ENCODE measurements at regions of chr11 and their contacts with region 1.

Region 1: DNA sequence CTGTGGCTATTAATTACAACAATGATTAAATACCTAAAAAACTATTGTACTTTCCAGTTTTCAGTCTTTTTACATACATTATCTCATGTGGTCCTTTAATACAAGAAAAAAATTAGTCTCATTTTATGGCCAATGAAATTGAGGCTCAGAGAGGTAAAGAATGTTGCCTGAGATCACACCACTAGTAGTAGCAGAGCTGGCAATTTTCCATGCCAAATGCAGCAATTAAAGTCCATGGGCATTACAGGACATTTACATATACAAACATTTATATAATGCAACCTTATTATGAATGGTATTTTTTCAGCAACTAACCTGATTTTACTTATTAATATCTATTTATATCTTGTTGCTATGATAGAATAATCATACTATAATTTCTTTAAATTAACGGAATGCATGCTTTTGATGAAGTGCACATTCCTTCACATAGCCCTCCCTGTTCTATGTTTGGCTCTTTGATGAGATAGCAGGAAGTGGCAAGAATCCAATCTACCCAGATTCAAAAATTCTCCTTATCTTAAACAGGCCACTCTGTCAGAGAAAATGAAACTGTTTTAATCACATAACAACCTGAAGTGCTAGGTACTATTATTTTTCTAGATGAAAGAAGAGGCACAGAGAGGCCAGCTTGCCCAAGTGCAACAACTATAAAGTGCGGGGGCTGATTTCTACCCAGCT is 120.9 kb upstream of the LDLRAD3 start:
- DNase-seq: no peak
- H3K4me3 ChIP-seq: no peak overlapping the region
- H3K27ac ChIP-seq: no peak overlapping the region
- H3K27me3 ChIP-seq: no peaks in the 10 kb centered on the region
- CTCF ChIP-seq: no peak

Region 2: GRCh38 chr11:35337136-35337918 is 485.6 kb before region 1 on chr11:
- CTCF ChIA-PET with region 1: no interaction called
- POLR2A ChIA-PET with region 1: no interaction called
- DNase-seq: peak; percentile 94
- H3K4me3 ChIP-seq: no peak overlapping the region
- H3K27ac ChIP-seq: peak overlapping the region; percentile 86
- H3K27me3 ChIP-seq: no peaks in the 10 kb centered on the region
- CTCF ChIP-seq: no peak

Region 3: DNA sequence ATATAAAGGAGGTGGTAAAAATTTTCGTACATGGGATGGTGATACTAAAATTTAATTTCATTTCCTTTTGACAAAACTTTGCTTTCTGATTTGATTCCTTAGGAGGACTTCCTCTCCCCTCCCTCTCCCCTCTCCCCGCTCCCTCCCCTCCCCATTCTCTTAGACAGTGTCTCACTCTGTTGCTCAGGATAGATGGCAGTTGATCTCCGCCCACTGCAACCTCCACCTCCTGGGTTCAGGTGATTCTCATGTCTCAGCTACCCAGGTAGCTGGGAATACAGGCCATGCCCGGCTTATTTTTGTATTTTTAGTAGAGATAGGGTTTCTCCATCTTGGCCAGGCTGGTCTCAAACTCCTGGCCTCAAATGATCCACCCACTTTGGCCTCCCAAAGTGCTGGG is 144.5 kb before region 1 on chr11:
- CTCF ChIA-PET with region 1: interaction called, 18 read pairs
- POLR2A ChIA-PET with region 1: no interaction called
- DNase-seq: no peak
- H3K4me3 ChIP-seq: no peak overlapping the region
- H3K27ac ChIP-seq: no peak overlapping the region
- H3K27me3 ChIP-seq: no peaks in the 10 kb centered on the region
- CTCF ChIP-seq: no peak

Region 4: GRCh38 chr11:35800970-35801953 is 21.7 kb before region 1 on chr11:
- CTCF ChIA-PET with region 1: interaction called, 104 read pairs
- POLR2A ChIA-PET with region 1: no interaction called
- DNase-seq: no peak
- H3K4me3 ChIP-seq: no peak overlapping the region
- H3K27ac ChIP-seq: no peak overlapping the region
- H3K27me3 ChIP-seq: no peaks in the 10 kb centered on the region
- CTCF ChIP-seq: no peak

Region 5: DNA sequence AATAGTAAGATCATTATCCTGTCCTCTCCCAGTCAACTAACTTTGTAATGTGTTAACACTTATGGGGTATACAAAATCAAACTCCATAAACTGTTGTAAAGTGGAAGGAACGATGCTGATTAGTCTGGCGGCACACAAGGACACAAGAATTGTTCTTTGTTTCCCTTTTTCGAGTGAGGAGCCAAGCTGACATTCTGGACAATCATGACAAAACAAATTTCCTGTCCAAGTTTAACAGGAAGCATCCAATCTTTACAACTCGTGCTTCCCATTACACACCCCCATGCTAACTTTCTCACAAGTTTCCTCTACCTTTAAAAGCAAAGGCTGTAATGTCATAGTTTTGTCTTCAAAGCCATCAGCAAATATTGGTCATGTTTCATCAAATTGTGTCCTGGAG is 100.5 kb after region 1 on chr11:
- CTCF ChIA-PET with region 1: interaction called, 15 read pairs
- POLR2A ChIA-PET with region 1: no interaction called
- DNase-seq: no peak
- H3K4me3 ChIP-seq: no peak overlapping the region
- H3K27ac ChIP-seq: no peak overlapping the region
- H3K27me3 ChIP-seq: peaks cover 2% of the 10 kb centered on the region
- CTCF ChIP-seq: no peak

Region 6: GRCh38 chr11:36062796-36063365 is 239.9 kb after region 1 on chr11:
- CTCF ChIA-PET with region 1: interaction called, 14 read pairs
- POLR2A ChIA-PET with region 1: no interaction called
- DNase-seq: no peak
- H3K4me3 ChIP-seq: no peak overlapping the region
- H3K27ac ChIP-seq: no peak overlapping the region
- H3K27me3 ChIP-seq: no peaks in the 10 kb centered on the region
- CTCF ChIP-seq: no peak

Region 7: DNA sequence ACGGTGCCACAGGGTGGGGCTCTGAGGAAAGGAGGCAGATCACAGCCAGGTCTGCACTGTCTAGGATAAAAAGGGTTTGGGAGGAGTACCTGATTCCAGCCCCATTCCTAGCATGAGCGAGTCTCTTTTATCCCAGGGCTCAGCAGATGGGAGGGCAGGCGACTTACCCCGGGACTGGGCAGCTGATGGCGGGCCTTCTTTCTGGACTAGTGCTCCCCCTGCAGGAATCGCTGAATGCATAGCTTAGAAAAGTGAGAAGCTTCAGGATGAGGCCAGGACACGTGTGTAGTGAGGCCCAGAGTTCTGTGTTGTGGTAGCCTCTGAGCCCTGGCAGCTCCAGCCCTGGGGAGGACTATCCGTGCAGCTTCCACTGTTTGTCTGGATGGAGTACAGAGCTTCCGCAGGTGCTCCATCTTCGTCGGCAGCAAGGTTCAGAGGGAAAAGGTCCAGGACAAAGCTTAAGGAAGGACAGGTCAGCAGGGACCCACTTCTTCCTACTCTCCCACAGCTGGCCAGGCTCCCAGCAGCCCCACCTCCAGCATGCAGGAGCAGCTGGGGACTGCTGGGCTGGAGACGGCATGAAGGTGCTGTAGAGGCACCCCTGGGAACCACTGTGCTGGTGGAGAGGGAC is 435.9 kb after region 1 on chr11:
- CTCF ChIA-PET with region 1: interaction called, 144 read pairs
- POLR2A ChIA-PET with region 1: no interaction called
- DNase-seq: peak; percentile 45
- H3K4me3 ChIP-seq: no peak overlapping the region
- H3K27ac ChIP-seq: no peak overlapping the region
- H3K27me3 ChIP-seq: peaks cover 14% of the 10 kb centered on the region
- CTCF ChIP-seq: peak; percentile 81

Measured in AG04450 (cell line).